ENCODE measurements at regions of chr9 and their contacts with region 1.

Region 1: DNA sequence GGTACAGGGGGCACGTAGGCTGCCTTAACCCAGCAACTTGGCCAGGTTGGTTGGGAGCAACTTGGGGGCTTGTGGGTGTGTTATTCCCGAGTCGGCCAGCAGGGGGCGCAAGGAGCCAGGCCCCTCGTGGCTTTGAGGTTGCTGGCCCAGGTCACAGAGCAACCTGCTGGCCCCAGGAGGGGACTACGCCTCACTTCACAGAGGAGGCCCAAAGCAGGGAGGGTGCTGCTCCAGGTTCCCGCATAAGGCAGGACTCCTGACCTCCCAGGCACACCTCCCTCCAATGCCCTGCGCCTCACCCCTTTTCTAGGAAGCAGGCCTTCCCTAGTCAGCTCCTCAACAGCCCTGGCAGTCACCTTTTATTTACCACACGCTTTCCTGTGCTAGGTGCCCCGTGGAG is 18.1 kb downstream of the KYAT1 start:
- DNase-seq: peak; percentile 80
- ATAC-seq: peak; percentile 99
- H3K4me3 Mint-ChIP-seq: no peak overlapping the region
- H3K27ac Mint-ChIP-seq: no peak overlapping the region
- H3K4me1 Mint-ChIP-seq: peaks cover 6% of the 10 kb centered on the region
- H3K27me3 Mint-ChIP-seq: no peaks in the 10 kb centered on the region
- CTCF ChIP-seq: peak; percentile 60

Region 2: GRCh38 chr9:128846680-128847030 is 17.0 kb before region 1 on chr9:
- CTCF ChIA-PET with region 1: no interaction called
- POLR2A ChIA-PET with region 1: interaction called, 10 read pairs
- intact Hi-C with region 1: no loop called
- DNase-seq: no peak
- ATAC-seq: no peak
- H3K4me3 Mint-ChIP-seq: no peak overlapping the region
- H3K27ac Mint-ChIP-seq: no peak overlapping the region
- H3K4me1 Mint-ChIP-seq: no peaks in the 10 kb centered on the region
- H3K27me3 Mint-ChIP-seq: no peaks in the 10 kb centered on the region
- CTCF ChIP-seq: no peak

Region 3: GRCh38 chr9:128902351-128903078 is 38.9 kb after region 1 on chr9:
- CTCF ChIA-PET with region 1: no interaction called
- POLR2A ChIA-PET with region 1: no interaction called
- intact Hi-C with region 1: loop called (anchors 2 kb)
- DNase-seq: peak; percentile 56
- ATAC-seq: peak; percentile 96
- H3K4me3 Mint-ChIP-seq: peak overlapping the region; percentile 64
- H3K27ac Mint-ChIP-seq: peak overlapping the region; percentile 95
- H3K4me1 Mint-ChIP-seq: peaks cover 48% of the 10 kb centered on the region
- H3K27me3 Mint-ChIP-seq: no peaks in the 10 kb centered on the region
- CTCF ChIP-seq: no peak

Region 4: DNA sequence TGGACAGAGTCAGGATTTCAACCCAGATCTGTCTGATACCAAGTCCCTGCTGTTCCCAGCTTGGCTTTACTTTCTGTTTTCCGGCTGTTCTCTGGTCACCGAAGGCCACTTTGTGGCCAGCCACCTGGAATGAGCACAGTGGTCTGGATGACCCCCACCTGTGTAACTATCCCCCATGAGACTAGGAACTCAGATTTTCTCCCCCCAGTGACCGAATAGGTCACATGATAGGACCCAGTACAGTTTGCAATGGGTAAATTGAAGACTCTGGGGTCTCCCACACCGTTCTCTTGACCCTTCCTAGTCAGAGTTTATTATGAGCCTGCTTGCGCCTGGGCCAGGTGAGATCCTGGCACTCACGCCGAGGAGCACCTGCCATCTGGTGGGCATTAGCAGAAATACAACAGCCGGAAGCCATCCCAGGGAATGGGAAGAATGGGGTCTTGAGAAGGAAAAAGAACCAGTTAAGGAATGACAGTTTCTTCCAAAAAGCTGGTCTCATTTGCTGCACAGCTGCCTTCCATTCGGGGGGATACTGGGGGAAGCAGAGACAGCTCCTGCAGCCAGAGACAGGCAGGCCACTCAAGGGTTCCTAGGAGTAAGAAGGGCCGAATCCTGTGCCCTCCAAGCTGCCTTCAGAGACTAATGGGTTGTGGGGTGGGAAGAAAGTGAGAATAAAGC is 64.2 kb after region 1 on chr9:
- CTCF ChIA-PET with region 1: interaction called, 69 read pairs
- POLR2A ChIA-PET with region 1: interaction called, 4 read pairs
- intact Hi-C with region 1: loop called (anchors 1 kb)
- DNase-seq: peak; percentile 30
- ATAC-seq: peak; percentile 86
- H3K4me3 Mint-ChIP-seq: no peak overlapping the region
- H3K27ac Mint-ChIP-seq: no peak overlapping the region
- H3K4me1 Mint-ChIP-seq: peaks cover 5% of the 10 kb centered on the region
- H3K27me3 Mint-ChIP-seq: no peaks in the 10 kb centered on the region
- CTCF ChIP-seq: peak; percentile 90

Region 5: DNA sequence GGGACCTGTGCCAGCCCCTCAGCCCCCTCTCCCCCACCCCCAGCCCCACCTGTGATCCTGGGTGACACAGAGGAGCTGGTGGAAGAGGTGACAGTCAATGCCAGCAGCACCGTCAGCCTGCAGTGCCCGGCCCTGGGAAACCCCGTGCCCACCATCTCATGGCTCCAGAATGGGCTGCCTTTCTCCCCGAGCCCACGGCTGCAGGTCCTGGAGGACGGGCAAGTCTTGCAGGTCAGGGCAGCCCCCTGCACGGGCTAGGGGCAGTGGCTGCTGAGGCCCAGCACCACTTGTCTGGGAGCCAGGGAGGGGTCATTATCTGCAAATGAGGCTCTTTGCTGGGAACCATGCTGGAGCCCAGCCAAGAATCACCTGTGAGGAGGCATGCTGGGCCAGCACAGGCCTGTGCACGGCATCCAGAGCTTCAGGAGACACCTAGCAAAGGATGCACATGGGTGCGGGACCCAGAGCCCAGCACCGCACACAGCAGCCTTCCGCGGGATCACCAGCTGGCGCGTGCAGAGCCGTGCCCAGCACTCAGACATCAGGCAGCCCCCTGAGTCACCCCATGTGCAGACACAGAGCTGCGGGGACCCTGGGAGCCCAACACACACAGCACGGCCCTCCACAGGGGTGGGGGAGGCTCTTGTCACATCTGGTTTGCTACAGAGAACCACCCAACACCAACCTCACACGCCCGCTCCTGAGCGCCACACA is 1519.1 kb after region 1 on chr9:
- CTCF ChIA-PET with region 1: no interaction called
- POLR2A ChIA-PET with region 1: no interaction called
- intact Hi-C with region 1: no loop called
- DNase-seq: no peak
- ATAC-seq: no peak
- H3K4me3 Mint-ChIP-seq: no peak overlapping the region
- H3K27ac Mint-ChIP-seq: no peak overlapping the region
- H3K4me1 Mint-ChIP-seq: no peaks in the 10 kb centered on the region
- H3K27me3 Mint-ChIP-seq: peaks cover 5% of the 10 kb centered on the region
- CTCF ChIP-seq: no peak

Measured in activated B cell treated with CpG ODN at 0.5 μM for 24 hours (primary cell).